Ascending aorta (tissue), 2 donors: ENCODE measurements at regions of chr3 and their contacts with region 1.

Region 1: DNA sequence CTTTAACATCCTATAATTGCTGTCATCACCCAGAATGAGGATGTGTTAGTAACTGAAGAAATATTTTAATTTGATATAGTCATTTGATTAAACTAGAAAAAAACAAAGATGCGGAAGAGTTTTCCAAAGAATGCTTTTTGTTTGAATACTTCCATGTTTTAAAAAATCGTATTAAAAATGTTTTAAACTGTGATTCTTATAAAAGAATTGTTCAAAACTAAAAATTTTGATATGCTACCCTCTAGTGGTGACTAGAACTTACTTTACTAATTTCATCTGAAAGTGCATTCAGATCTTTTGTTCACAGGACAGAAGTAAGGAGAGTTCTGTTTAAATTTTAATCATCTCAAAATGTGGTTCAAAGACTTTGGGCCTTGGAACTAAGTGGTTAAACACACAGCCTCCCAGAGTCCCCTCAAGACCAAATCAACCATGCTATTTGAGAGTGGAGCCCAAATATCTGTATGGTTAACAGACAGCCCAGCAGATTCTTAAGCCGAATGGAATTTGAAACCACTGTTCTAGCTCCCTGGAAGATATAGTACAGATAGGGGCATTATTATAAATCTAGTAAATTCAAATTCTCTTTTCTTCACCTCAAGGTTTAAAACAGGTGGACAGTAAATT is 45.3 kb upstream of the SYNPR start:
- DNase-seq: no peak
- H3K4me3 ChIP-seq: no peak overlapping the region
- H3K27ac ChIP-seq: no peak overlapping the region
- H3K4me1 ChIP-seq: no peaks in the 10 kb centered on the region
- H3K27me3 ChIP-seq: no peaks in the 10 kb centered on the region
- CTCF ChIP-seq: peak in 1 of 3 experiments; percentile 31

Region 2: GRCh38 chr3:62622553-62623193 is 610.2 kb before region 1 on chr3:
- intact Hi-C with region 1: loop called (anchors 10 kb)
- DNase-seq: no peak
- H3K4me3 ChIP-seq: no peak overlapping the region
- H3K27ac ChIP-seq: no peak overlapping the region
- H3K4me1 ChIP-seq: no peaks in the 10 kb centered on the region
- H3K27me3 ChIP-seq: no peaks in the 10 kb centered on the region
- CTCF ChIP-seq: peak; percentile 36 to 64 (median 37)

Region 3: GRCh38 chr3:63103843-63104242 is 129.0 kb before region 1 on chr3:
- intact Hi-C with region 1: no loop called
- DNase-seq: no peak
- H3K4me3 ChIP-seq: no peak overlapping the region
- H3K27ac ChIP-seq: no peak overlapping the region
- H3K4me1 ChIP-seq: no peaks in the 10 kb centered on the region
- H3K27me3 ChIP-seq: no peaks in the 10 kb centered on the region
- CTCF ChIP-seq: no peak